ENCODE measurements at regions of chr5 and their contacts with region 1.

Region 1: DNA sequence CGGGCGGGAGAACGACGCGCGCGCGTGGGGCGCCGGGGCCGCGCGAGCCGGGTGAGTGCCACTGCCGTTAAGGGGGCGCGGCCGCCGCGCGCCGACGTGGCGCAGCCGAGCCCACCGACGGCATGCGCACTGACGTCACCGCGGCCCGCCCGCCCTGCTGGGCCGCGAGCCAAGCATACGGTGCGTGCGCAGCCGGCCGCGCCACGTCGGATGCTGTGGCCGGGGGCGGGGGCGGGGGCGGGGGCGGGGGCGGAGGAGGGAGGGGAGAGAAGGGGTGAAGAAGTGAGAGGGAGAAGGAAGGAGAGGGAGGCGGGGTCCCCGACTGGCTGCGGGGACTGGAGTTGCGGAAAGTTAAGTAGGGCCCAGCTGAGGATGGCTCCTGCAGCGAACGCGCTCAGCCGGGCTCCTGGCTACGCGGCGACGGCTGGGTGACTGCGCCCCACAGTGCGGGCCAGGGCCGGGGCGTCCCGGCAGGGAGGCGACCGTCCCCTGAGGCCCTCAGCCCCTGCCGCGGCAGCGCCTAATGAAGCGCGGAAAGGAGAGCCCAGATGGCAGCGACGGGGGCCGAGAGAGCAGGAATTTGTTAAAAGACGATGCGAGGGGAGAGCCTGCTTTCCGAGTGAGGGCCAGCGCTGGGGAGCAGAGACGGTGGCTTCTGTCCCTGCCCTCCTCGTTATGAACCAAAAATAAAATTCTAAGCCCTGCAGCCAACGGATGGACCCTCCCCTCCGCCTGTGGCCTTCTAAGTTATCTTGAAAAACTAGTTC is at the start of gene DAP:
- DNase-seq: peak; percentile 85
- H3K4me3 ChIP-seq: peak within 1 kb of the TSS; percentile 62 to 95 (median 84)
- H3K27ac ChIP-seq: peak within 1 kb of the TSS; percentile 81
- H3K4me1 ChIP-seq: peaks cover 24% of the 10 kb centered on the region
- H3K27me3 ChIP-seq: no peaks in the 10 kb centered on the region
- CTCF ChIP-seq: no peak
- POLR2A ChIP-seq: peak; percentile 59
- total RNA-seq, gene DAP: 173 and 188 TPM in 2 replicates

Region 2: DNA sequence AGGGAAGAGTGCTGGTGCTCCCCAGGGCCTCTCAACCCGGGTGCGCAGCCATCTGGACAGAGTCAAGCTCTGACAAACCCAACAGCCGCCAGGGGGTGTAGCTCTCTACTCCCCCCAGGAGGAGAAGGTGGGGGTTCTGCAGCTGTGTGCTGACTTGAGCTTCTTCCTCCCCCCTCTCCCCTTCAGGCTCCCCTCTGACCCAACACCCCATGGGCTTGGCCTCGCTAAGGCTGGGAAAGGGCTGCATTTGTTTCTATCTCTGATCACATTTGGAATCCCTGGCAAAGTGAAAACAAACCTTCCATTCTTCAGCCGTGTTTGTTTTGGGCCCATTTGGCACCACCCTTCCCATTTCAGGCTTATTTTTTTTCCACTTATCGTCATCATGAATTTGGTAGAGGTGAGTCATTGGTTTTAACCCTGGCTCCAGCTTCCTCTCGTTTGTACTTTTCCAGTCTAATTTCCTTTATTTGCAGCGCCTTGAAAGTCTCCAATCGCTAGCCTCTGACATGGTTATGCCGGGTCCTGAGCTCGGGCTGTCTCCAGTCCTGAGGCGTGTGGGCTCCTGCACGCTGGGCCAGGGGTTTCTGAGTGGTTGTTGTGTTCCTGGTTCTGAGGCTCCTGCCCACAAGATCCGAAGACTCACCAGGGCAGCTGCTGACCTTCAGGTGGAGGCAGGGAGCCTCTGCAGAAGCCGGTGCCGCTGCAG is 36.4 kb before region 1 on chr5:
- CTCF ChIA-PET with region 1: interaction called, 10 read pairs
- POLR2A ChIA-PET with region 1: no interaction called
- dilution Hi-C with region 1: no loop called
- intact Hi-C with region 1: loop called (anchors 1 kb)
- DNase-seq: peak; percentile 97
- H3K4me3 ChIP-seq: peak overlapping the region in 1 of 3 experiments; percentile 21
- H3K27ac ChIP-seq: peak overlapping the region; percentile 81
- H3K4me1 ChIP-seq: peaks cover 53% of the 10 kb centered on the region
- H3K27me3 ChIP-seq: no peaks in the 10 kb centered on the region
- CTCF ChIP-seq: peak; percentile 60 to 81
- POLR2A ChIP-seq: peak; percentile 47

Region 3: DNA sequence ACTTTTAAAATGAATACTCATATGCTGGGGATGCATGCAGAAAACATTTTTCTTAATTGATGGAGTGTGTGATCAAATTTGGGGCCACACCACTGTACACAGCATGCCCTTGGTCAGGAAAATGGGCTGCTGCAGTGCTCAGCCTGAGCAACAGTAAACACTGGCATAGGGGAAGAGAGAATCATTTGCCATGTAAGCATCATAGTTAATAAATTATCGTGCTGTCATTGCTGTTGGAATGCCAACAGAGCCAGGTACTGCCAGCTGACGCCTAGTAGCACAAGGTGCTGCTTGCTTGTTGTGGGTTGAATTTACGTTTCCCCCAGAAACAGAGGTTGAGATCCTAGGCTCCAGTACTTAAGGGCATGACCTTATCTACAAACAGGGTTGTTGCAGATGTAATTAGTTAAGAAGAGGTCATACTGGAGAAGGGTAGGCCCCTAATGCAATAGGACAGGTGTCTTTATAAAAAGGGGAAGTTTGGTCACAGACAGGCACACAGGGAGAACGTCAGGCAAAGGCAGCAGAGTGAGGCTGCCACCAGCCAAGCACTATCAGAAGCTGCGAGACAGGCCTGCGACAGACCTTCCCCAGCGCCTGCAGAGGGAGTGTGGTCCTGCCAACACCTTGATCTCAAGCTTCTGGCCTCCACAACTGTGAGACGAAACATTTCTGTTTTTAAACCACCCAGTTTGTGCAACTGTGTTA is 25.6 kb before region 1 on chr5:
- CTCF ChIA-PET with region 1: interaction called, 3 read pairs
- POLR2A ChIA-PET with region 1: no interaction called
- dilution Hi-C with region 1: no loop called
- intact Hi-C with region 1: loop called (anchors 1 kb)
- DNase-seq: no peak
- H3K4me3 ChIP-seq: no peak overlapping the region
- H3K27ac ChIP-seq: no peak overlapping the region
- H3K4me1 ChIP-seq: peaks cover 29% of the 10 kb centered on the region
- H3K27me3 ChIP-seq: no peaks in the 10 kb centered on the region
- CTCF ChIP-seq: no peak
- POLR2A ChIP-seq: no peak

Region 4: GRCh38 chr5:10856683-10857337 is 95.5 kb after region 1 on chr5:
- CTCF ChIA-PET with region 1: no interaction called
- POLR2A ChIA-PET with region 1: no interaction called
- dilution Hi-C with region 1: no loop called
- intact Hi-C with region 1: loop called (anchors 1 kb)
- DNase-seq: peak; percentile 30
- H3K4me3 ChIP-seq: no peak overlapping the region
- H3K27ac ChIP-seq: no peak overlapping the region
- H3K4me1 ChIP-seq: no peaks in the 10 kb centered on the region
- H3K27me3 ChIP-seq: peaks cover 8 to 14% of the 10 kb centered on the region in 2 experiments
- CTCF ChIP-seq: peak; percentile 88 to 94
- POLR2A ChIP-seq: no peak